HepG2 (cell line): ENCODE measurements at regions of chr1 and their contacts with region 1.

Region 1: GRCh38 chr1:225441314-225442122 is 13.7 kb upstream of the LBR start:
- DNase-seq: peak; percentile 87
- ATAC-seq: peak; percentile 81
- H3K4me3 ChIP-seq: peak overlapping the region; percentile 44 to 67 (median 48)
- H3K27ac ChIP-seq: peak overlapping the region; percentile 81
- H3K4me1 ChIP-seq: peaks cover 72% of the 10 kb centered on the region
- H3K27me3 ChIP-seq: no peaks in the 10 kb centered on the region
- CTCF ChIP-seq: peak; percentile 69
- EP300 ChIP-seq: peak in 1 of 2 experiments; percentile 31; a peak in 1 of 4 replicates
- POLR2A ChIP-seq: peak; percentile 25 to 58; a peak in 3 of 4 replicates
- RAD21 ChIP-seq: 0 out of 2 replicates have a peak, but pooled peaks have one; percentile 11

Region 2: GRCh38 chr1:225343624-225344023 is 97.9 kb before region 1 on chr1:
- CTCF ChIA-PET with region 1: no interaction called
- POLR2A ChIA-PET with region 1: no interaction called
- in situ Hi-C with region 1: no loop called
- intact Hi-C with region 1: no loop called
- DNase-seq: peak; percentile 28
- ATAC-seq: no peak
- H3K4me3 ChIP-seq: no peak overlapping the region
- H3K27ac ChIP-seq: no peak overlapping the region
- H3K4me1 ChIP-seq: no peaks in the 10 kb centered on the region
- H3K27me3 ChIP-seq: no peaks in the 10 kb centered on the region
- CTCF ChIP-seq: peak; percentile 40
- EP300 ChIP-seq: no peak
- POLR2A ChIP-seq: no peak
- RAD21 ChIP-seq: no peak

Region 3: GRCh38 chr1:225427235-225428067 is 14.1 kb before region 1 on chr1 and contains the start of gene LBR:
- CTCF ChIA-PET with region 1: no interaction called
- POLR2A ChIA-PET with region 1: interaction called, 7 read pairs
- in situ Hi-C with region 1: no loop called
- intact Hi-C with region 1: loop called (anchors 2 kb)
- DNase-seq: no peak
- ATAC-seq: peak; percentile 79
- H3K4me3 ChIP-seq: peak within 1 kb of the TSS; percentile 83 to 95 (median 93)
- H3K27ac ChIP-seq: peak within 1 kb of the TSS; percentile 86
- H3K4me1 ChIP-seq: peaks cover 48% of the 10 kb centered on the region
- H3K27me3 ChIP-seq: no peaks in the 10 kb centered on the region; a peak in 1 of 5 replicates
- CTCF ChIP-seq: no peak
- EP300 ChIP-seq: no peak
- POLR2A ChIP-seq: peak in 1 of 2 experiments; percentile 72; a peak in 3 of 4 replicates
- RAD21 ChIP-seq: no peak
- total RNA-seq, gene LBR: 64.4 and 76.7 TPM in 2 replicates

Region 4: DNA sequence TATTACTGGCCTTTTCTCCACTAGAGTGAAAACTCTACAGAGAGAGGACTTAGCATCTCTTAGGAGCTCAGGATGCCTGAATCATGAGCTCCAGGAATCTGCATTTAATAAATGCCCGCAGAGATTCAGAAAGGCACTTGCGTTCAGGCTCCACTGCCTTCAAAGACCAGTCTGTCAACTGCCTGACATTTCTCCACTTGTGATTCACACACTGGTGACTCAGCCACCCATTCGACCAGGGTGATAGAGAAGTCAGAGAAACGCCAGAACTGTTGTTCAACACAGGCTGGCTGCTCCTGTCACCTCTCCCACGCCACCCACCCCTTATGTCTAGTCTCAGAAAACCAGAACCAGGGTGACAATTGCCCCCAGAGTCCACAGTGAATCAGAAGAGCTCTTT is 13.2 kb after region 1 on chr1:
- CTCF ChIA-PET with region 1: no interaction called
- POLR2A ChIA-PET with region 1: interaction called, 14 read pairs
- in situ Hi-C with region 1: no loop called
- intact Hi-C with region 1: no loop called
- DNase-seq: no peak
- ATAC-seq: peak; percentile 59
- H3K4me3 ChIP-seq: no peak overlapping the region
- H3K27ac ChIP-seq: no peak overlapping the region
- H3K4me1 ChIP-seq: peaks cover 56% of the 10 kb centered on the region
- H3K27me3 ChIP-seq: peaks cover 0 to 6% of the 10 kb centered on the region in 2 experiments; a peak in 2 of 5 replicates
- CTCF ChIP-seq: no peak
- EP300 ChIP-seq: no peak
- POLR2A ChIP-seq: no peak
- RAD21 ChIP-seq: no peak

Region 5: GRCh38 chr1:225498549-225499136 is 57.1 kb after region 1 on chr1:
- CTCF ChIA-PET with region 1: no interaction called
- POLR2A ChIA-PET with region 1: no interaction called
- in situ Hi-C with region 1: no loop called
- intact Hi-C with region 1: no loop called
- DNase-seq: no peak
- ATAC-seq: no peak
- H3K4me3 ChIP-seq: no peak overlapping the region
- H3K27ac ChIP-seq: no peak overlapping the region
- H3K4me1 ChIP-seq: no peaks in the 10 kb centered on the region
- H3K27me3 ChIP-seq: no peaks in the 10 kb centered on the region
- CTCF ChIP-seq: no peak
- EP300 ChIP-seq: no peak
- POLR2A ChIP-seq: no peak
- RAD21 ChIP-seq: no peak